SK-N-SH (cell line): ENCODE measurements at regions of chr12 and their contacts with region 1.

Region 1: GRCh38 chr12:8045952-8046944 is 13.7 kb downstream of the FOXJ2 start:
- DNase-seq: peak; percentile 81
- H3K4me3 ChIP-seq: no peak overlapping the region; a peak in 1 of 4 replicates
- H3K27ac ChIP-seq: no peak overlapping the region
- H3K4me1 ChIP-seq: no peaks in the 10 kb centered on the region
- H3K27me3 ChIP-seq: no peaks in the 10 kb centered on the region
- CTCF ChIP-seq: peak; percentile 91
- EP300 ChIP-seq: no peak
- RAD21 ChIP-seq: peak; percentile 70

Region 2: GRCh38 chr12:7929083-7929795 is 117.0 kb before region 1 on chr12:
- CTCF ChIA-PET with region 1: no interaction called
- POLR2A ChIA-PET with region 1: no interaction called
- DNase-seq: no peak
- H3K4me3 ChIP-seq: no peak overlapping the region
- H3K27ac ChIP-seq: no peak overlapping the region
- H3K4me1 ChIP-seq: no peaks in the 10 kb centered on the region
- H3K27me3 ChIP-seq: no peaks in the 10 kb centered on the region
- CTCF ChIP-seq: no peak
- EP300 ChIP-seq: no peak
- RAD21 ChIP-seq: no peak

Region 3: DNA sequence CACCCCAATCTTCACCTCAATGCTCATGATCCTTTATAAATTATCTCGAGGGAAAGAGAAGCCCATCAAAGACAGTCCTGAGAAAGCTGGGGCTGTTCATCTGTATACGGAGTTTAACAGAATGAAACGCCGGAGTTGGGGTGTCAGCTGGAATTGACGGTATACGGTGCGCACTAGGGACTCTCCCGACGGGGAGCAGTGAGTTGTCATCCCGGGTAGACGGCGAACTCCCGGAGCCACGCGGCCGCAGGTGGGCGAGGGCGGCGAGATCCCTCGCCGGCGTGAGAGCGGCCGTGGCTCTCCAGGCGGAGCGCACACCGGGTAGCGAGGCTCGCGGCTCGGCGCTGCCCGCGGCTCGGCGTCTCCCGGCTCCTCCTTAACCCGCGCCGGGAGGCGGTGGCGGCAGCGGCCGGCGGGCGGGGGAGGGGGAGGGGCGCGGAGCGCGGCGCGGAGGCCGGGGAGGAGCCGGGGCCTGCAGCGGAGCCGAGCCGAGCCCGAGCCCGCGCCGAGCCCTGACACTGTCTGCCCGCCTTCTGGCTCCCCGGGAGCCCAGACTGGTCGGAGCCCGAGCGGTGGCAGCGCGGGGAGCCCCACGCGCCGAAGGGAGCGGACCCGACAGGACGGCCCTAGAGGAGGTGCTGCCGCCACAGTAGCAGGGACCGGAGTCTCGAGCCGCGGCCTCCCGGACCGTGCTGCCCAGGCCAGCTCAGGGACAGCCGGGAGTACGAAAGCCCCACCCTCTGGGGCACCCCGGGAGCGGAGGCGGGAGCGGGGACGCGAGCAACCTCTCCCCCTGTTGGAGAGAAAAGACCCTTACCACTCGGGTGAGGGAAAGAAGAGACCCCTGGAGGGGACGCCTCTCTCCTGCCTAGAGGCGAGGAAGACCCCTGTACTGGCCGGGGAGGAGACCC is 13.8 kb before region 1 on chr12 and contains the start of gene FOXJ2:
- CTCF ChIA-PET with region 1: interaction called, 41 read pairs
- POLR2A ChIA-PET with region 1: no interaction called
- DNase-seq: peak; percentile 91
- H3K4me3 ChIP-seq: peak within 1 kb of the TSS; percentile 85 to 89
- H3K27ac ChIP-seq: peak within 1 kb of the TSS; percentile 53 to 63; a peak in 2 of 4 replicates
- H3K4me1 ChIP-seq: peaks cover 21 to 25% of the 10 kb centered on the region in 2 experiments; a peak in 3 of 4 replicates
- H3K27me3 ChIP-seq: no peaks in the 10 kb centered on the region
- CTCF ChIP-seq: peak; percentile 20
- EP300 ChIP-seq: peak in 1 of 2 experiments; percentile 30; a peak in 1 of 4 replicates
- RAD21 ChIP-seq: no peak
- polyA plus RNA-seq, gene FOXJ2: 3.0 and 3.4 TPM in 2 replicates

Region 4: DNA sequence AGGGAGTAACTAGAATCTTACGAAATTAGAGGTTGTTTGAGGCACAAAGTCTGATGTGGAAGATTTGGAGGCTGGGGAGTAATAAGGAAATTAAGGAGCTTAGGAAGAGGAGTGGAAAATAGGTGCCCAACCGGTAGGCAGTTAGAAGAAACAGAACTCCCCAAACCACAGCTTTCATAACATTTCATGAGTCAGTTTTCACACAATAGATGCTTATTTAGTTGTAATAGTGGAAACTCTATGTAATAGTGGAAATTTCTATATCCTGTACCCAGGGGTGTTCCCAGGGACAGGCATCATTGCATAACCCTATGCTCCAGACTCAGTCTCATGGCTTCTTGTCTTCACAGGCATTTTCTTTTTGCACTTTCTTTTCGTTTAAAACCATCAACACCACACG is 11.6 kb after region 1 on chr12:
- CTCF ChIA-PET with region 1: interaction called, 23 read pairs
- POLR2A ChIA-PET with region 1: no interaction called
- DNase-seq: no peak
- H3K4me3 ChIP-seq: no peak overlapping the region
- H3K27ac ChIP-seq: no peak overlapping the region
- H3K4me1 ChIP-seq: no peaks in the 10 kb centered on the region
- H3K27me3 ChIP-seq: no peaks in the 10 kb centered on the region
- CTCF ChIP-seq: no peak
- EP300 ChIP-seq: no peak
- RAD21 ChIP-seq: no peak

Region 5: DNA sequence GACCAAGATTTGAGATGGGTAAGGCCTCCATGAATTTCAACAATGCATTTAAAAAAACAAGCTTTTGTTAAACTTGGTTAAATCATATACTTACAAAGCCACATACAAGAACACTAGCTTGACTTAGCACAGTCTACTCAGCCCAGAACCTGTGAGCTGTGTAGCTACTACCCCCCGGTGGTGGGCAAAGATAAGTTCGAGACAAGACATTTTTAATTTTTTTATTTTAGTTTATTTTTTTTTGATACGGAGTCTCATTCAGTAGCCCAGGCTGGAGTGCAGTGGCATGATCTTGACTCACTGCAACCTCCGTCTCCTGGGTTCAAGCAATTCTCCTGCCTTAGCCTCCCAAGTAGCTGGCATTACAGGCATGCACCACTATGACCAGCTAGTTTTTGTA is 32.1 kb after region 1 on chr12:
- CTCF ChIA-PET with region 1: interaction called, 89 read pairs
- POLR2A ChIA-PET with region 1: no interaction called
- DNase-seq: peak; percentile 64
- H3K4me3 ChIP-seq: no peak overlapping the region
- H3K27ac ChIP-seq: no peak overlapping the region
- H3K4me1 ChIP-seq: peaks cover 3 to 16% of the 10 kb centered on the region in 2 experiments; a peak in 3 of 4 replicates
- H3K27me3 ChIP-seq: no peaks in the 10 kb centered on the region
- CTCF ChIP-seq: peak; percentile 71
- EP300 ChIP-seq: no peak
- RAD21 ChIP-seq: peak; percentile 84